PC-3 (cell line): ENCODE measurements at regions of chr1 and their contacts with region 1.

Region 1: GRCh38 chr1:48109390-48110013 is 112.3 kb upstream of the TRABD2B start:
- DNase-seq: peak; percentile 80
- ATAC-seq: peak; percentile 81
- H3K4me3 ChIP-seq: no peak overlapping the region
- H3K27ac ChIP-seq: no peak overlapping the region
- H3K4me1 ChIP-seq: no peaks in the 10 kb centered on the region
- H3K27me3 ChIP-seq: peaks cover 21% of the 10 kb centered on the region
- CTCF ChIP-seq: peak; percentile 87

Region 2: GRCh38 chr1:47738560-47739182 is 370.8 kb before region 1 on chr1:
- CTCF ChIA-PET with region 1: no interaction called
- POLR2A ChIA-PET with region 1: no interaction called
- intact Hi-C with region 1: loop called (anchors 5 kb)
- DNase-seq: peak; percentile 79
- ATAC-seq: peak; percentile 94
- H3K4me3 ChIP-seq: no peak overlapping the region
- H3K27ac ChIP-seq: no peak overlapping the region
- H3K4me1 ChIP-seq: no peaks in the 10 kb centered on the region
- H3K27me3 ChIP-seq: peaks cover 6% of the 10 kb centered on the region; the same call in 1 of the 2 replicates
- CTCF ChIP-seq: peak; percentile 76

Region 3: DNA sequence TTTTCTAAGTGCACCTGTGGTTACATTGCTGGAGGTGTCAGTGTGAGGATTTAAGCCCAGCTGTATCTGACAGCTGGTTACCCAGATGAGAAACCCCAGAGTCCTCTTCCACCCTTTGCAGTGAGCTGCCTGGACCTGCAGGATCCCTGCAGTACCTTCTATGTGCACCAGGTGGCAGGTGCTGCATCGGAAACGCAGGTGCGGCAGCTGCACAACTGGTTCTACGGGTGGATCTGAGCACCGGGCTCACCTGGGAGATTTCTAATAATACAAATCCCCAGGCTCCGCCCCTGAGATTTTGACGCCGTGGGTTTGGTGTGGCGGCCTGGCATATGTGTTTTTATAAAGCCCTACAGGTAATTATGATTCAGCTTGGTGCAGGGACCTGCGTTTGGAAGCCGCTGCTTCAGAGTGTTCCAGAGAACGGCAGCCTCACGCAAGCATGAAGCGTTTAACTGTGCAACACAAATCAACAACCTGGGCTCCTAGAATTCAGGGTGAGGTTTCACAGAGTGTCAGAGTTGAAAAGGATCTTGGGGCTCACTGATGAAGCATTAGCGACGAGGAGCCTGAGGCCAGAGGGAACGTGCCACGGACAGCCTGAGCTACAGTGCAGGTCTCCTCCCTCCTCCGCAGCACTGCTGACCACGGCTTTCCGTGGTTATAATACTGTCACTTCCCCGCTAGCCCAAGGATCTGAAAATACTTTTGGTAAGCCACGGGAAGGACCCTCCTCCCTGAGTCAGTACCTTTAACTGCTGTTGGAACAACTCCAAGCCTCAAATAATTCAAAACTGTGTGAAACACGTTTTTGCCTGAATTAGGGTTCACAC is 15.6 kb before region 1 on chr1:
- CTCF ChIA-PET with region 1: interaction called, 10 read pairs
- POLR2A ChIA-PET with region 1: no interaction called
- intact Hi-C with region 1: no loop called
- DNase-seq: peak; percentile 94
- ATAC-seq: peak; percentile 98
- H3K4me3 ChIP-seq: peak overlapping the region; percentile 51
- H3K27ac ChIP-seq: no peak overlapping the region
- H3K4me1 ChIP-seq: 0 out of 2 replicates have a peak, but pooled peaks cover 5% of the 10 kb centered on the region
- H3K27me3 ChIP-seq: peaks cover 48% of the 10 kb centered on the region
- CTCF ChIP-seq: peak; percentile 92

Region 4: GRCh38 chr1:48697066-48697707 is 587.7 kb after region 1 on chr1:
- CTCF ChIA-PET with region 1: no interaction called
- POLR2A ChIA-PET with region 1: no interaction called
- intact Hi-C with region 1: loop called (anchors 5 kb)
- DNase-seq: peak; percentile 72
- ATAC-seq: peak; percentile 64; the same call in 1 of the 2 replicates
- H3K4me3 ChIP-seq: no peak overlapping the region
- H3K27ac ChIP-seq: no peak overlapping the region
- H3K4me1 ChIP-seq: peaks cover 8% of the 10 kb centered on the region
- H3K27me3 ChIP-seq: peaks cover 13% of the 10 kb centered on the region
- CTCF ChIP-seq: peak; percentile 92